ENCODE measurements at regions of chr10 and their contacts with region 1.

Region 1: GRCh38 chr10:112532189-112532588 is 85.2 kb downstream of the VTI1A start:
- DNase-seq: peak; percentile 65
- H3K4me3 Mint-ChIP-seq: peak overlapping the region; percentile 64
- H3K27ac Mint-ChIP-seq: peak overlapping the region; percentile 37
- H3K4me1 Mint-ChIP-seq: peaks cover 30% of the 10 kb centered on the region
- H3K27me3 Mint-ChIP-seq: peaks cover 11% of the 10 kb centered on the region

Region 2: DNA sequence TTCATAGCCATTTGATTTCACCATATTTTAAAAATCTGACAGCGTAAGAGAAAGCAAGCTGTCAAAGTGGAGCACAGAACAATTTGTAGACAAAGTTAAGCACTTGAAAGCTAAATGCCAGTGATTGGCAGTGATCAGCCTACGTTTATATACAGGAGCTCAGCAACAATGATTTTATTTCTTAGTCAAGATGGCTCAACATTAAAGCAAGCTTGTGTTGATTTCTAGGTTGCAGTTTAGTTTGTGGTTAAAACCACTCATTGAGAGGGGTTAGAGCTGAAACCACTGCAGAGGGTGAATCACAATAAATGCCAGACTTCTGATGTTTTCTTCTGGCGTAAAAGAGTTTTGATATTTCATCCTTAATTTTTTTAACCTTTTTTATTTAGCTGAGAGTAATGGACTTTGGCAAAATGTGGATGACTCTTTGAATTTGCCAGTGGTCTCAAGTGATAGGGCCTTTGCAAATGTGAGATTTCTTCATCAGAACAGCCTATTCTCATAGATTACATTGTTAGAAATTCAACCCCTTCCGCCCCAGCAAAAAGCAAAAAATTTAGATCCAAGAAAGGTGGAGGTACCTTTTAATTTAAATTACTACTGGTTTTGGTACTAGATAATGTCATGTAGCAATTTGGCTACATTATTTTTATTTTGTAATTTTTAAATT is 1539.0 kb before region 1 on chr10:
- intact Hi-C with region 1: loop called (anchors 5 kb)
- DNase-seq: peak; percentile 79
- H3K4me3 Mint-ChIP-seq: peak overlapping the region; percentile 66
- H3K27ac Mint-ChIP-seq: peak overlapping the region; percentile 18
- H3K4me1 Mint-ChIP-seq: peaks cover 21% of the 10 kb centered on the region
- H3K27me3 Mint-ChIP-seq: no peaks in the 10 kb centered on the region

Region 3: DNA sequence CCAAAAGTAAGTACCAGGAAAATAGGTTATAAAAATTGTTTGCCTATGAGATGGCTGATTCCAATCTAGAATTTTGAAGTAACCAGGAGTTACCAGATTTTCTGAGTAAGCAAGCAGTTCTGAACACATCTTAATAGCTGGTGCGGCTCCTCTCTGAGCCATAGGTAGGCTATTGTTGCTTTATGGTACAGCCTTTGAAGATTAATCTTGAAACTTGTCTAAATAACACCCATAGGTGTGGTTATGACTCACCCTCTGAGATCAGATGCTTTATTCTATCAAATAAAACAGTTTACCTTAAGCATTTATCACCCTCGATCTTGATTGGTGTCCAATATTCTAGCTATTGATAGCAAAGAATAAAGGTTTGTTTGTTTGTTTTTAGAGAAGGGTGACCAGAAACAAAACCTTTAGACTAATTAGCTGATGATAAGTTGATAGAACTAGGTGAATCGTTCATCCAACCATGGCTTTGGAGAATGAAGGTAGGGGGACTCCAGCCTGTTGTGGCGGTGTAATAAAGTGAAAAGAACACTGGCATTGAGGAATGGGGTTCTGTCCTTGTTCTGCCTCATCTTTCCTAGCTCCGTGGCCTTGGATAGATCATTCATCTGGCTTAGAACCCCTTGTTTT is 12.9 kb before region 1 on chr10:
- intact Hi-C with region 1: loop called (anchors 2 kb)
- DNase-seq: no peak
- H3K4me3 Mint-ChIP-seq: no peak overlapping the region
- H3K27ac Mint-ChIP-seq: no peak overlapping the region
- H3K4me1 Mint-ChIP-seq: peaks cover 8% of the 10 kb centered on the region
- H3K27me3 Mint-ChIP-seq: peaks cover 8% of the 10 kb centered on the region

Region 4: GRCh38 chr10:112981553-112981952 is 449.4 kb after region 1 on chr10:
- intact Hi-C with region 1: loop called (anchors 5 kb)
- DNase-seq: peak; percentile 67
- H3K4me3 Mint-ChIP-seq: no peak overlapping the region
- H3K27ac Mint-ChIP-seq: peak overlapping the region; percentile 52
- H3K4me1 Mint-ChIP-seq: peaks cover 9% of the 10 kb centered on the region
- H3K27me3 Mint-ChIP-seq: peaks cover 75% of the 10 kb centered on the region

Measured in activated CD4-positive, alpha-beta T cell treated with anti-CD3 and anti-CD28 coated beads, Interleukin-2, amount 10 ng/mL, durations not matched to agents 24 days and 14 days (primary cell).